IMR-90 (cell line): ENCODE measurements at regions of chr17 and their contacts with region 1.

Region 1: GRCh38 chr17:47229535-47230443 is 20.6 kb downstream of the MYL4 start:
- DNase-seq: peak; percentile 96
- ATAC-seq: peak; percentile 85
- H3K4me3 ChIP-seq: peak overlapping the region; percentile 5; the same call in 1 of the 2 replicates
- H3K27ac ChIP-seq: peak overlapping the region; percentile 72
- H3K4me1 ChIP-seq: peaks cover 24% of the 10 kb centered on the region
- H3K27me3 ChIP-seq: no peaks in the 10 kb centered on the region
- CTCF ChIP-seq: peak; percentile 99
- POLR2A ChIP-seq: peak; percentile 68
- RAD21 ChIP-seq: peak; percentile 100

Region 2: DNA sequence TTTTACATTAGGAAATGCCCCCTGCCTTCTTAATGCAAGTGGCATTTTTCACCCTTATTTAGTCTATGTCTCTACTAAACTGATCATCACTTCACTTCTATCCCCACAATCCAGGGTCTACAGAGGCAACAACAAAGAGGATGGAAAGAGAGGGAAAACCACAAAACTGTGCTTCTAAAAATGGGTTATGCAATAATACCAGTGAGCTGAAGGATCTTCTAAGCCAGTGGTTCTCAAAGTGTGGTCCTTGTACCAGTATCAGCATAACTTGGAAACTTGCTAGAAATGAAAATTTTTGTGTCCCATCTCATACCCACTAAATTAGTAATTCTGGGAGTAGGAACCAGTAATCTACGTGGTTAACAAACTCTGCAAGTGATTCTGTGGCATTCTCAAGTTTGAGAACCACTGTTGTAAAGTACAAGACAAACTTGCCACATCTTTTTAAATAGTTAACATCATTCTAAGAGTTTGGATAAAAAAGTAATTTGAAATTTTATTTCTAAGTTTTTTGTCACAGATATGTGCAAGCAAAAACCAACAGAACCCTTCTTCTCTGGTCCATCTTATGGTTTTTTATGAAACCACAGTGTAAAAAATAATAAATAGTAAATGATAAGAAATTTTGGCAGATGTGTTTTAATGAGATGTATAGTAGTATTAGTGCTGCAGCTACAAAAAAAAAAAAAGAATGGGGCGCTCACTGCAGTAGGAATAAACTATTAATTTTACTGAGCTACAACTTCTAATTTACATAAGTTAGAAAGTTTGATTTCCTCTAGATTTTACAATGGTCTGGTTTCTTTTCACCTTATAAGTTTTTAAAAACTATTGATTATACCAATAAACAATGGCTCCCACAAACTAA is 56.9 kb before region 1 on chr17:
- CTCF ChIA-PET with region 1: no interaction called
- POLR2A ChIA-PET with region 1: no interaction called
- dilution Hi-C with region 1: no loop called
- in situ Hi-C with region 1: no loop called
- intact Hi-C with region 1: no loop called
- DNase-seq: no peak
- ATAC-seq: no peak
- H3K4me3 ChIP-seq: no peak overlapping the region
- H3K27ac ChIP-seq: no peak overlapping the region
- H3K4me1 ChIP-seq: peaks cover 2% of the 10 kb centered on the region; the same call in 1 of the 2 replicates
- H3K27me3 ChIP-seq: no peaks in the 10 kb centered on the region
- CTCF ChIP-seq: no peak
- POLR2A ChIP-seq: no peak
- RAD21 ChIP-seq: no peak

Region 3: GRCh38 chr17:47279062-47279736 is 49.4 kb after region 1 on chr17:
- CTCF ChIA-PET with region 1: no interaction called
- POLR2A ChIA-PET with region 1: no interaction called
- dilution Hi-C with region 1: no loop called
- in situ Hi-C with region 1: no loop called
- intact Hi-C with region 1: loop called (anchors 1 kb)
- DNase-seq: peak; percentile 97
- ATAC-seq: peak; percentile 79
- H3K4me3 ChIP-seq: no peak overlapping the region
- H3K27ac ChIP-seq: peak overlapping the region; percentile 84
- H3K4me1 ChIP-seq: peaks cover 51% of the 10 kb centered on the region
- H3K27me3 ChIP-seq: no peaks in the 10 kb centered on the region
- CTCF ChIP-seq: peak; percentile 31; the same call in 1 of the 2 replicates
- POLR2A ChIP-seq: no peak; the same call in 1 of the 2 replicates
- RAD21 ChIP-seq: peak; percentile 34

Region 4: GRCh38 chr17:47305302-47305923 is 75.6 kb after region 1 on chr17:
- CTCF ChIA-PET with region 1: interaction called, 8 read pairs
- POLR2A ChIA-PET with region 1: no interaction called
- dilution Hi-C with region 1: no loop called
- in situ Hi-C with region 1: loop called (anchors 5 kb)
- intact Hi-C with region 1: no loop called
- DNase-seq: peak; percentile 93
- ATAC-seq: peak; percentile 94
- H3K4me3 ChIP-seq: no peak overlapping the region
- H3K27ac ChIP-seq: peak overlapping the region; percentile 40
- H3K4me1 ChIP-seq: peaks cover 12% of the 10 kb centered on the region
- H3K27me3 ChIP-seq: no peaks in the 10 kb centered on the region
- CTCF ChIP-seq: no peak
- POLR2A ChIP-seq: no peak
- RAD21 ChIP-seq: 0 out of 2 replicates have a peak, but pooled peaks have one; percentile 7

Region 5: DNA sequence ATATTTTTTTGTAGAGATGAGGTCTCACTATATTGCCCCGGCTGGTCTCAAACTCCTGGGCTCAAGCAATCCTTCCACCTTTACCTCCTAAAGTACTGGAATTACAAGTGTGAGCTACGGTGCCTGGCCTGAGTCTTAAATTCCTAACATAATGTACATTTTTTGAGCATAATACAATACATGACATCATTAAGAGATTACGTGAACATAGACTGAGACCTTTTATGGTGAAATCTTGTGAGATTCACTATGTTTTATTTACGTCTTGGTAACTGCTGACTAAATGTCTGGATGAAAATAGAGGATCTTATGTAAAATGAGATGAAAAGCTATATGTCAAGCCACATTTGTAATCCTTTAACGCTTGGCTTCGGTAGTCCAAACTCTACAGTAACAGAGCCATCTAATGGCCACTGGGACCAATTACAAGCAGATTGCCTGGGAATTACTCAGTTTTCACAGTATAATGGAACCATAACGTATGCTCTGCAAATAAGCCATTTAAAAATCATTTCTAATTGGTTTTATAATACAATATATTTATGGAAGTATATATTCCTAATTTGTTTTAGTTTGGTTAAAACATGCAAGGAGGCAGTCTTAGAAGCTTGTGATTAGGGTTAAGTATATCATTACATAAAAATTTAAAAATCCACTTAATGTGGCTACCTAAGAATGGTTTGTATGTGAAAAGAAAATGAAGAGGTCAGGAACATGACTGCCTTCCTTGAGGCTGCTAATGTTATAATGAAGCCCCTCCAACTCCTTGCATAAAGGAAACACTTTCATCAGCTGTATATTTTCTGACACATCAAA is 85.9 kb after region 1 on chr17:
- CTCF ChIA-PET with region 1: interaction called, 30 read pairs
- POLR2A ChIA-PET with region 1: no interaction called
- dilution Hi-C with region 1: no loop called
- in situ Hi-C with region 1: loop called (anchors 5 kb)
- intact Hi-C with region 1: loop called (anchors 1 kb)
- DNase-seq: peak; percentile 99
- ATAC-seq: peak; percentile 86
- H3K4me3 ChIP-seq: no peak overlapping the region
- H3K27ac ChIP-seq: peak overlapping the region; percentile 95
- H3K4me1 ChIP-seq: peaks cover 13% of the 10 kb centered on the region
- H3K27me3 ChIP-seq: no peaks in the 10 kb centered on the region
- CTCF ChIP-seq: peak; percentile 92
- POLR2A ChIP-seq: 0 out of 2 replicates have a peak, but pooled peaks have one; percentile 28
- RAD21 ChIP-seq: peak; percentile 98

Region 6: DNA sequence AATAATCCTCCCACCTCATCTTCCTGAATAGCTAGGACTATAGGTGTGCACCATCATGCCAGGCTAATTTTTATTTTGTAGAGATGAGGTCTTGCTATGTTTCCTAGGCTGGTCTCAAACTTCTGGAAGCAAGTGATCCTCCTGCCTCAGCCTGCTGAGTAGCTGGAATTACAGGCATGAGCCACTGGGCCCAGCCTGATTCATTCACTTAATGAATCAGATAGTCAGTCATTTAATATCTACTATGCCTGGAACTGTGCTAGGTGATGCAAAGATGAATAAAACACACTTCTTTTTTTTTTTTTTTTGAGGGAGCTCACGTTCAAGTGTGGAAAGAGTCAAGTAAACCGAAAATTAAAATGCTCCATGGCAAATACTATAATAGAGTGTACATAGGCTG is 133.4 kb after region 1 on chr17:
- CTCF ChIA-PET with region 1: no interaction called
- POLR2A ChIA-PET with region 1: no interaction called
- dilution Hi-C with region 1: no loop called
- in situ Hi-C with region 1: no loop called
- intact Hi-C with region 1: no loop called
- DNase-seq: no peak
- ATAC-seq: no peak
- H3K4me3 ChIP-seq: no peak overlapping the region
- H3K27ac ChIP-seq: no peak overlapping the region
- H3K4me1 ChIP-seq: no peaks in the 10 kb centered on the region
- H3K27me3 ChIP-seq: no peaks in the 10 kb centered on the region
- CTCF ChIP-seq: no peak
- POLR2A ChIP-seq: no peak
- RAD21 ChIP-seq: no peak

Region 7: GRCh38 chr17:47615766-47616424 is 386.1 kb after region 1 on chr17:
- CTCF ChIA-PET with region 1: interaction called, 3 read pairs
- POLR2A ChIA-PET with region 1: no interaction called
- dilution Hi-C with region 1: no loop called
- in situ Hi-C with region 1: loop called (anchors 10 kb)
- intact Hi-C with region 1: loop called (anchors 2 kb)
- DNase-seq: peak; percentile 62
- ATAC-seq: peak; percentile 58
- H3K4me3 ChIP-seq: no peak overlapping the region
- H3K27ac ChIP-seq: no peak overlapping the region; the same call in 1 of the 2 replicates
- H3K4me1 ChIP-seq: peaks cover 11% of the 10 kb centered on the region
- H3K27me3 ChIP-seq: no peaks in the 10 kb centered on the region
- CTCF ChIP-seq: peak; percentile 71
- POLR2A ChIP-seq: no peak
- RAD21 ChIP-seq: peak; percentile 61